HEK293 (cell line): ENCODE measurements at regions of chr18 and their contacts with region 1.

Region 1: DNA sequence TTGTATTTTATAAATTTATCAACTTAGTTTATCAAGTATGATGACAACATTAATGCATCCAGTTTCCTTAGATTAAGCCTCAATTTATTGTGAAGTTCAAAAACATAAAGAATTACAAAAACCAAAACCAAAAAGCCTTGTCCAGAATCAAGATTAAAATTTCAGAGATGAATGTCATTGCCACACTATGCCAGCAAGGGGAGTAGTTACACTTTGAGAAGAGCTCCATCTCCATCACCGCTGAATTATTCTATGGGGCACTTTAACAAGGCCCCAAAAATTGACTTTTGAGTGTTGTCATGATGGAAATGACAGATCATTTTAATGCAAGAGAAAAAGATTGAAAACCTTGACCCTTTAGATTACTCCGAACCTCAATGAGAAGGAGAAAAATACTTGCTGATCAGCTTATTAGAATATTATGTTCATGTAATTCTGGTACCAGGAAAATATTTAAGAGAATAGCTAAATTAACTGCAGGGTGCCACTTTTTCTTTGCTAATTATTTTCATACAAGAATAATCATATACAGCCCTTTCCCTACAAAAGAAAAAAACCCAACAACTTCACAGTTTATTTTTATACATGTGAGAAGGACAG is 152.5 kb upstream of the AQP4 start:
- H3K4me3 ChIP-seq: no peak overlapping the region
- H3K27ac ChIP-seq: no peak overlapping the region
- H3K4me1 ChIP-seq: no peaks in the 10 kb centered on the region
- CTCF ChIP-seq: peak; percentile 42; the same call in 1 of the 2 replicates

Region 2: GRCh38 chr18:27033722-27034121 is 15.7 kb after region 1 on chr18:
- CTCF ChIA-PET with region 1: no interaction called
- POLR2A ChIA-PET with region 1: no interaction called
- H3K4me3 ChIP-seq: no peak overlapping the region
- H3K27ac ChIP-seq: no peak overlapping the region
- H3K4me1 ChIP-seq: no peaks in the 10 kb centered on the region
- CTCF ChIP-seq: no peak

Region 3: DNA sequence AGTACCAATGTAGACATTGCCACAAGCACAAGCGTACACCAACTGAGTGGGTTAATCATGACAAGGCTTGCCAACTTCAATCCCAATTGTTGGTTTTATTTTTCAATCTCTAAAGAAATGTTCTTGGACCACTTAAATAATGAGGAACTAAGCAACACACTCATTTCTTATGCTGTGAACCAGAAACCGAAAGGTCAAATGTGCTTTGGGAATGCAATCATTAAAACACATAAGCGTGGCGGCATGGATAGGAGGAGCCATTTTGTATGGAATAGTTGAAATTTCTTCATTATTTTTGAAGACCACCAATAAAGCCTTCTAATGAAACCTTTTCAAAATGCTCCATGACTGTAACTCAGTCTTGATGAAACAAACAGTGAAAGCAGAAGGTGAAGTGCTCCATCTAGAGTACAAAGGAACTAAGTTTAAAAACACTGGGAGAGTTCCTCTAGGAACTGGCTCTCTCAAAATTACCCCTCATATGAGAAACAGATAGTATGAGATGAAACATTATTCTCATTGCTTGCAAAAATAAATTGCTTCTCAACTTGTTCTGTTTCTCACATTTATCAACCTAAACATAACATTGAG is 280.3 kb after region 1 on chr18:
- CTCF ChIA-PET with region 1: interaction called, 11 read pairs
- POLR2A ChIA-PET with region 1: no interaction called
- H3K4me3 ChIP-seq: no peak overlapping the region
- H3K27ac ChIP-seq: no peak overlapping the region
- H3K4me1 ChIP-seq: no peaks in the 10 kb centered on the region
- CTCF ChIP-seq: 0 out of 2 replicates have a peak, but pooled peaks have one; percentile 23

Region 4: DNA sequence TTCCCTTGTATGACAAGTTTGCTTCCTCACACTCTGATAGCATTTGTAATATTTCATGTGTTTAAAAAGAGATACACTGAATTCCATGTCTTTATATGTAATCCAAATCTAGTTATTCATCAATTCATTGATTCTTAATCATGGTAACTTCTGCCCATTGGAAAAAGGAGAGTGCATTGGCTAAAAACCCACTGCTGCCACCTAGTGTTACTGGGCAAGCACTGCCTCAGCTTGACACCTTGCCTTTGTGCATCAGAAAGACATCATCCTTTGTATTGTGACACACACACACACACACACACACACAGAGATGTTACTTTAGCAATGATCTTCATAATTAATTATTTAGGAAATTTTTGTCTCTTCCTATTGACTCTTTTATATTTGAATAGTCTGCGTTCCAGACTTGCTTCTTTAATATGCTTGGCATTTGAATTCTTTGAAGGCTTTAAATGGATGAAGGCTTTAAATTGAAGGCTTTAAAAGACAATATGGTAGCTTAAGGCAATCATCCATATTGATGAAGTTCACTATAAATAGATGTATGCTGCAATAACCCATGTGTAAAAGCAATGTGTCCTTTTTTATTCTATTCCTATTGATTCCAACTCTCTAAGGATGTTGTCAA is 581.3 kb after region 1 on chr18:
- CTCF ChIA-PET with region 1: interaction called, 11 read pairs
- POLR2A ChIA-PET with region 1: no interaction called
- H3K4me3 ChIP-seq: no peak overlapping the region
- H3K27ac ChIP-seq: no peak overlapping the region
- H3K4me1 ChIP-seq: no peaks in the 10 kb centered on the region
- CTCF ChIP-seq: peak; percentile 40; the same call in 1 of the 2 replicates